Posterior vena cava (tissue), 2 donors: ENCODE measurements at regions of chr17 and their contacts with region 1.

Region 1: DNA sequence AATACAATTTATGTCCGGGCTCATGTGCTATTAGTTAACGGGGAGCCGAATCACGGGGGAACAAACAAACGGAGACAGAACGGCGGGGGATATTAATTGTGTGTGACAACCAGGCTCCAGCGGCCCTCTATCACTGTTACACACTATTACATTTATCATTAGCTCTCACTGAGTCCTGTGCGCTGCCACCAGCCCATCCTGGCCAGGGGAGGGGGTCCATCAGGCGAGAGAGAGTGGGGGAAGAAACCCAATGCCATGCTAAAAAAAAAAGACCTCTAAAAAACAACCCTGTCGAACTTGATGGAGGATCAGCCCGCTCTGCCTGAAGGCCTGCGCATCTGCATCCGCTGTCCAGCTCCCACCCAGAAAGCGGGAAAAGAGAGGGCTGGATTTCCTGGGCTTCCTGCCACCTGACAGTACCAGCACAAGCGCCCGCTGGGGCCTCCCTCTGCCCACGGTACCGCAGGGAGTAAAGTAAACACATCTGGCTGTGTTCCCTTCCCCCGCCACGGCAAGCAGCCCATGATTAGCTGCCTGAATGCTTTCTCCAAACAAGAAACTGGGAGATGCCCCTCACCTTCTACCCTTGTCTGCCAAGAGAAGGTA is 41.7 kb downstream of the PIPOX start:
- DNase-seq: no peak

Region 2: DNA sequence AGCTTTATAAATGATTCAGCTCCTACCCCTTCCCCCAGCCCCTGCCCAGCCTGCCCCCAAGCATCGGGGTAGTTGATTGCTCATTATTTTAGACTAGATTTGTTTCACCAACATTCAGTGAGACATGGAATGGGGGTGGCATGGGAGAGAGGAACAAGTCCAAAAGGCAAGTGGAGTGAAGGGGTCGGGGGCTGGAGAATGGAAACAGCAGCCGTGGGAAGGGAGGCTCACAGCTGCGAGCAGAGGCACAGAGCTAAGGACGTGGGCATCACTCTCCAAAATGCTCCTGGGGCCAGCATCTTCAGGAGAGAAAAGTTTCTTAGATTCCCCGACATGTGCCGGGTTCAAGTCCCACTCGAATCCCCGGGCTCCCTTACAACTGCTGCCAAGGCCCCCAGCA is 22.4 kb before region 1 on chr17:
- intact Hi-C with region 1: loop called in 1 of 2 experiments (anchors 1 kb)
- DNase-seq: no peak

Region 3: DNA sequence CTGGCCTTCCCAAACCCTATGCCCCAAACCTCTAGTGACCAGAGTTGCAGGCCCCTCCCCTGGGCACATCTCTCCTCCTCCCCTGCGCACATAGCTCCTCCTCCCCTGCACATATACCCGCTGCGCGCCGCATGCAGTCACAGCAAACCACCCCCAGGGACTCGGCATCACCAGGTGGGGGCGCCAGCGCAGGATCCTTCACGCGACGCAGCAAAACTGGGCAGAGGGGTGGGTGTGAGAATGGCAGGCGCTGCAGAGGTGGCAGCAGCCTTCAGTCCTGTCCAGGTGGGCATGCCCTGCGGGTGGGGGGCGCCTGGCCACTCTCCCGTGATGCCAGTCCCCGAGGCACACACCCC is 532.5 kb after region 1 on chr17:
- intact Hi-C with region 1: no loop called
- DNase-seq: peak; percentile 95